Mucosa of descending colon (tissue), 3 donors: ENCODE measurements at regions of chr6 and their contacts with region 1.

Region 1: GRCh38 chr6:63672582-63673129 is 37.1 kb downstream of the PHF3 start:
- DNase-seq: no peak
- ATAC-seq: no peak
- H3K4me3 ChIP-seq: no peak overlapping the region
- H3K4me1 ChIP-seq: peaks cover 24% of the 10 kb centered on the region
- CTCF ChIP-seq: no peak

Region 2: GRCh38 chr6:63635588-63636517 is 36.8 kb before region 1 on chr6 and contains the start of gene PHF3:
- intact Hi-C with region 1: loop called in 1 of 2 experiments (anchors 5 kb)
- DNase-seq: peak; percentile 91 to 94 (median 93)
- ATAC-seq: peak; percentile 96
- H3K4me3 ChIP-seq: peak within 1 kb of the TSS; percentile 88
- H3K4me1 ChIP-seq: peaks cover 36% of the 10 kb centered on the region
- CTCF ChIP-seq: no peak
- total RNA-seq, gene PHF3: 49.7 to 78.0 (median 75.8) TPM